Activated CD4-positive, alpha-beta memory T cell treated with anti-CD3 and anti-CD28 coated beads for 36 hours (primary cell): ENCODE measurements at regions of chr1 and their contacts with region 1.

Region 1: GRCh38 chr1:156096640-156097391 is 14.6 kb upstream of the MEX3A start:
- DNase-seq: peak; percentile 97
- H3K4me3 Mint-ChIP-seq: peak overlapping the region; percentile 64
- H3K27ac Mint-ChIP-seq: peak overlapping the region; percentile 96
- H3K4me1 Mint-ChIP-seq: peaks cover 56% of the 10 kb centered on the region
- H3K27me3 Mint-ChIP-seq: peaks cover 11% of the 10 kb centered on the region

Region 2: DNA sequence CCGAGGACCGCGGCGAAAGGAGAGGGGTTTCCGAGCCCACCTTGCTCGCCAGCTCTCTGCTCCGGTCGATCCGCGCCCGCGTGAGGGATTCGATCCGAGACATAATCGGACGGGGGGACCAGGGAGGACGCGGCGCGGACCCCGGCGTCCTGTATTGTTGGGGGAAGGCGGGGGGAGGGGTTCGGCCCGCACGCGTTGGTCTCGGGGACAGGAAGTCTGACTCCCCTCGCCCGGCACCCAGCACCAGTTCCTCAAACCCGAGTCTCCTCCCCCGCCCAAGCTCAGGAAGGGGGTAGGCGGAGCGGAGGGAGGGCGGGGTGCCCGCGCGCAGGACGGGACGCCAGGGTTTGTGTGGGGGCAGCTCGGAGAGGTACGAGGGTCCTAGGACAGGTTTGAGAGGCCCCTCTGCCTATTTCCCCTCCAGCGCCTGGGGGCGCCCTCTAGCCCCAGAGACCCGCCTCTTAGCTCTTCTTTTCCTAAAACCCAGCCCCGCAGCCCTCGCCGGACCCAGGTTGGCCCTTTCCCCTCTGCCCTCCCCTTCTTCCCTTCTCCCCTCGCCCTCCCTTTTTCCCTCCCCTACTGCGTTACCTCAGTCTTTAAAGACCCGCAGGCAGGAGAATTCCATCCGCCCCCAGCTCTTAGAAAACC is 118.4 kb before region 1 on chr1 and contains the start of gene ARHGEF2:
- CTCF ChIA-PET with region 1: no interaction called
- POLR2A ChIA-PET with region 1: no interaction called
- intact Hi-C with region 1: no loop called
- DNase-seq: peak; percentile 88
- H3K4me3 Mint-ChIP-seq: peak within 1 kb of the TSS; percentile 96
- H3K27ac Mint-ChIP-seq: peak within 1 kb of the TSS; percentile 96
- H3K4me1 Mint-ChIP-seq: peaks cover 66% of the 10 kb centered on the region
- H3K27me3 Mint-ChIP-seq: no peaks in the 10 kb centered on the region
- total RNA-seq, gene ARHGEF2: 165 to 174 TPM

Region 3: GRCh38 chr1:156114101-156114916 is 17.5 kb after region 1 on chr1 and contains the start of gene LMNA:
- CTCF ChIA-PET with region 1: interaction called, 1,097 read pairs
- POLR2A ChIA-PET with region 1: interaction called, 95 read pairs
- intact Hi-C with region 1: loop called (anchors 1 kb)
- DNase-seq: peak; percentile 92
- H3K4me3 Mint-ChIP-seq: peak within 1 kb of the TSS; percentile 93
- H3K27ac Mint-ChIP-seq: peak within 1 kb of the TSS; percentile 87
- H3K4me1 Mint-ChIP-seq: peaks cover 23% of the 10 kb centered on the region
- H3K27me3 Mint-ChIP-seq: no peaks in the 10 kb centered on the region
- total RNA-seq, gene LMNA: 210 to 211 TPM

Region 4: DNA sequence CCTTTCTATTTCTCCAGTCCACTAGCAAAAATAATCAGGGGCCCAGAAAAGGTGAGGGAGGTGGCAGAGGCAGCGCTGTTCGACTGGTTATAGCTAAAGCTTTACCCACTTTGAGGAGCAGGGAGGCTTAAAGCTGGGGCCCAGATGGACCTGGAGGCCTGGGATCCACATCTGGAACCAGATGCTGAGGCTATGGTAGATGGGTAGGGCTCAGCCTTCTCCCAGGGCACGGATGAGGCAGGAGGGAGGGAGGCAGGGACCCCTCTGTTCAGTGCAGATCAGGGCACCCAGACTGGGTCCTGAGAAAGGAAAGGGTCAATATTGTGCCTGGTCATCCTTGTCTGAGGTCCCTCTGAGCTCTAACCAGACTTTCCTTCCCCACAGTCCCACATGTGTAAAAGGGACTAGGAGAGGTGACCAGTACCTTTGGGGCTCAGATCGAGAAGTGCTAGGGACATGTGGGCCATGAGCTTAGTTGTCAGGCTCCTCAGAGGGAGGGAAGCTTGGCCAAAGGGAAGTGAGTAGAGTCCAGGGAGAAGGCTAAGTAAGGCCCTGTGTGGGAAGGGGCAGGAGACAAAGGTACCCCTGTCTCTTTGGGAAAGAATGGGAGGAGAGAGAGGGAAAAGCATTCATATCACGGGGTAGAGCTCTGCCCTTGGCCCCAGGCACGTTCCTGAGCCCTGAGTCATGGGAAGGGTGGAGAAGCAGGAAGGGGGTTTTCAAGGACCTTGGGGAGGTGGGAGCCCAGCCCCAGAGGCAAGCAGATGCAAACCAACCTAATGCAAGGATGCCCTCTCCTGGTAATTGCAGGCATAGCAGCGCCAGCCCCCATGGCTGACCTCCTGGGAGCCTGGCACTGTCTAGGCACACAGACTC is 33.1 kb after region 1 on chr1:
- CTCF ChIA-PET with region 1: interaction called, 1,097 read pairs
- POLR2A ChIA-PET with region 1: interaction called, 180 read pairs
- intact Hi-C with region 1: loop called (anchors 1 kb)
- DNase-seq: peak; percentile 89
- H3K4me3 Mint-ChIP-seq: no peak overlapping the region
- H3K27ac Mint-ChIP-seq: peak overlapping the region; percentile 50
- H3K4me1 Mint-ChIP-seq: peaks cover 52% of the 10 kb centered on the region
- H3K27me3 Mint-ChIP-seq: no peaks in the 10 kb centered on the region

Region 5: GRCh38 chr1:156146020-156146768 is 49.4 kb after region 1 on chr1:
- CTCF ChIA-PET with region 1: interaction called, 20 read pairs
- POLR2A ChIA-PET with region 1: no interaction called
- intact Hi-C with region 1: no loop called
- DNase-seq: peak; percentile 64
- H3K4me3 Mint-ChIP-seq: peak overlapping the region; percentile 50
- H3K27ac Mint-ChIP-seq: peak overlapping the region; percentile 81
- H3K4me1 Mint-ChIP-seq: peaks cover 35% of the 10 kb centered on the region
- H3K27me3 Mint-ChIP-seq: no peaks in the 10 kb centered on the region

Region 6: DNA sequence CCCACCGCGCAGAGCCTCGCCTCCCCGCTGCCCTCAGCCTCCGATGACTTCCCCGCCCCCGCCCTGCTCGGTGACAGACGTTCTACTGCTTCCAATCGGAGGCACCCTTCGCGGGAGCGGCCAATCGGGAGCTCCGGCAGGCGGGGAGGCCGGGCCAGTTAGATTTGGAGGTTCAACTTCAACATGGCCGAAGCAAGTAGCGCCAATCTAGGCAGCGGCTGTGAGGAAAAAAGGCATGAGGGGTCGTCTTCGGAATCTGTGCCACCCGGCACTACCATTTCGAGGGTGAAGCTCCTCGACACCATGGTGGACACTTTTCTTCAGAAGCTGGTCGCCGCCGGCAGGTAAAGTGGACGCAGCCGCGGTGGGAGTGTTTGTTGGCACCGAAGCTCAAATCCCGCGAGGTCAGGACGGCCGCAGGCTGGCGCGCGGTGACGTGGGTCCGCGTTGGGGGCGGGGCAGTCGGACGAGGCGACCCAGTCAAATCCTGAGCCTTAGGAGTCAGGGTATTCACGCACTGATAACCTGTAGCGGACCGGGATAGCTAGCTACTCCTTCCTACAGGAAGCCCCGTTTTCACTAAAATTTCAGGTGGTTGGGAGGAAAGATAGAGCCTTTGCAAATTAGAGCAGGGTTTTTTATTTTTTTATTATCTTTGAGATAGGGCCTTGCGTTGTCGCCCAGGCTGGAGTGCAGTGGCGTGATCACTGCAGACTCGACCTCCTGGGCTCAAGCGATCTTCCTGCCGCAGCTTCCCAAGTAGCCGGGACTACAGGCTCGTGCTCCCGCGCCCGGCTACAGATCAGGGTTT is 116.2 kb after region 1 on chr1 and contains the start of gene PMF1:
- CTCF ChIA-PET with region 1: interaction called, 10 read pairs
- POLR2A ChIA-PET with region 1: interaction called, 28 read pairs
- intact Hi-C with region 1: no loop called
- DNase-seq: peak; percentile 98
- H3K4me3 Mint-ChIP-seq: peak within 1 kb of the TSS; percentile 76
- H3K27ac Mint-ChIP-seq: peak within 1 kb of the TSS; percentile 96
- H3K4me1 Mint-ChIP-seq: peaks cover 40% of the 10 kb centered on the region
- H3K27me3 Mint-ChIP-seq: no peaks in the 10 kb centered on the region
- total RNA-seq, gene PMF1: 99.5 to 105 TPM